ENCODE measurements at regions of chr11 and their contacts with region 1.

Region 1: GRCh38 chr11:13343931-13344717 is 66.5 kb downstream of the BMAL1 start:
- DNase-seq: peak; percentile 87
- ATAC-seq: peak; percentile 71
- H3K4me3 Mint-ChIP-seq: no peak overlapping the region
- H3K27ac Mint-ChIP-seq: no peak overlapping the region
- H3K4me1 Mint-ChIP-seq: peaks cover 34% of the 10 kb centered on the region
- H3K27me3 Mint-ChIP-seq: no peaks in the 10 kb centered on the region
- CTCF ChIP-seq: peak; percentile 82

Region 2: GRCh38 chr11:13152736-13153533 is 191.2 kb before region 1 on chr11:
- CTCF ChIA-PET with region 1: no interaction called
- POLR2A ChIA-PET with region 1: no interaction called
- intact Hi-C with region 1: no loop called
- DNase-seq: no peak
- ATAC-seq: no peak
- H3K4me3 Mint-ChIP-seq: no peak overlapping the region
- H3K27ac Mint-ChIP-seq: no peak overlapping the region
- H3K4me1 Mint-ChIP-seq: no peaks in the 10 kb centered on the region
- H3K27me3 Mint-ChIP-seq: peaks cover 12% of the 10 kb centered on the region
- CTCF ChIP-seq: no peak

Region 3: GRCh38 chr11:13189561-13190426 is 154.3 kb before region 1 on chr11:
- CTCF ChIA-PET with region 1: interaction called, 13 read pairs
- POLR2A ChIA-PET with region 1: no interaction called
- intact Hi-C with region 1: no loop called
- DNase-seq: no peak
- ATAC-seq: no peak
- H3K4me3 Mint-ChIP-seq: no peak overlapping the region
- H3K27ac Mint-ChIP-seq: no peak overlapping the region
- H3K4me1 Mint-ChIP-seq: no peaks in the 10 kb centered on the region
- H3K27me3 Mint-ChIP-seq: peaks cover 14% of the 10 kb centered on the region
- CTCF ChIP-seq: no peak

Region 4: GRCh38 chr11:13238879-13239514 is 105.1 kb before region 1 on chr11:
- CTCF ChIA-PET with region 1: interaction called, 10 read pairs
- POLR2A ChIA-PET with region 1: no interaction called
- intact Hi-C with region 1: no loop called
- DNase-seq: peak; percentile 65
- ATAC-seq: peak; percentile 64
- H3K4me3 Mint-ChIP-seq: no peak overlapping the region
- H3K27ac Mint-ChIP-seq: no peak overlapping the region
- H3K4me1 Mint-ChIP-seq: peaks cover 2% of the 10 kb centered on the region
- H3K27me3 Mint-ChIP-seq: peaks cover 13% of the 10 kb centered on the region
- CTCF ChIP-seq: peak; percentile 95

Region 5: DNA sequence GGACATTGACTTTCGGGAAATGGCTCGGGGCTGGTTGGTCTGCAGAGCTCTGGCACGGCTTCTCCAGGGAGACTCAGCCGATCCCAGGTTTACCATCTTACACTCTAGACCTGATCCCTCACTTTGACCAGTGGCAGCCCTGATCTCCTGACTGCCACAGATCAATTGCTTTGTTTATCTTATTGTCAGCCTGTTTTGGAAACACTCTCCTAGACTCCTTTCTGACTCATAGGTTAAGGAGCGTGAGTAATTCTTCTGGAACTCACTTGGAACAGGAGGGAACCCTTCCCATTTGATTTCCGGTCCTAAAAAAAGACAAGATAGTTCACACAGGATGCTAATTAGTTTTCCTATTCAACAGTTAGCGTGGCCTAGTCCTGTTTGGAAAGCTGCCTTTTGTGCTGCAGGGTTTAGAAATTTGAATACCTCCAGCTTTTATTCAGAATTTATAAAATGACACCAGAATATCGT is 82.5 kb before region 1 on chr11:
- CTCF ChIA-PET with region 1: interaction called, 14 read pairs
- POLR2A ChIA-PET with region 1: no interaction called
- intact Hi-C with region 1: loop called (anchors 10 kb)
- DNase-seq: no peak
- ATAC-seq: no peak
- H3K4me3 Mint-ChIP-seq: no peak overlapping the region
- H3K27ac Mint-ChIP-seq: no peak overlapping the region
- H3K4me1 Mint-ChIP-seq: peaks cover 3% of the 10 kb centered on the region
- H3K27me3 Mint-ChIP-seq: peaks cover 2% of the 10 kb centered on the region
- CTCF ChIP-seq: no peak

Region 6: DNA sequence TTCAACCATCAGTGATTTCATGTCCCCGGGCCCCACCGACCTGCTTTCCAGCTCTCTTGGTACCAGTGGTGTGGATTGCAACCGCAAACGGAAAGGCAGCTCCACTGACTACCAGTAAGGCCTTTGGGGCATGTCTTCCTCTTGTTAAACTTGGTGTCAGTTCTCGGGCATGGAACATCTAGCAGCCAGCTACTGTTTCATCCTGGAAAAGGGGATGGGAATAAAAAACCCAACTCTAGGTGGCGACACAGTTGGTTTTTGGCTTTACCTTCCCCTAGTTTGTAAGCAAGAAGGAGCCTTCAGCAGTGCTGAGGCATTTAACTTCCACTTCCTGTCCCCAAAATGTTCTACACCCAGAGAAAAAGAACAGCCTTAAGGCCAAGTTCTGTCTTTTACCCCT is 10.2 kb after region 1 on chr11:
- CTCF ChIA-PET with region 1: interaction called, 19 read pairs
- POLR2A ChIA-PET with region 1: no interaction called
- intact Hi-C with region 1: no loop called
- DNase-seq: no peak
- ATAC-seq: no peak
- H3K4me3 Mint-ChIP-seq: no peak overlapping the region
- H3K27ac Mint-ChIP-seq: no peak overlapping the region
- H3K4me1 Mint-ChIP-seq: peaks cover 1% of the 10 kb centered on the region
- H3K27me3 Mint-ChIP-seq: no peaks in the 10 kb centered on the region
- CTCF ChIP-seq: peak; percentile 17